Right lobe of liver (tissue), 6 donors: ENCODE measurements at regions of chr22 and their contacts with region 1.

Region 1: DNA sequence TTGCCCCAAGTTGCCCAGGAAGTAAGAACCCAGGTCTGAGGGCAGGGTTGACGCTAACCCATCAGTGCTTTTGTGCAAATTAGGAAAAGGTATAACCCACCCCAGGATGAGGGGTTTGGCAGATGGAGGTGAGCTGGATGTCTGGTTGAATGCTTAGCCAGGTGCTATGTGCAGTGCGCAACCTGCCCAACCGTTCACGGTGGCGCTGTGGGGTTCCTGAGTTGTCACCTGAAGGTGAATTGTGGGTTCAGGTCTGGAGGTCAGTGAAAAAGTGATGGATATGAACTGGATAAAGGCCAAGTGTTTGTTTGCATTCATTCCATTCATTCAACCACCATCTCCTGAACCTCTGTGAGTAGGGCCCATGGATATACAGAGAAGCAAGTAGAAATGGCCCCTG is 14.3 kb upstream of the LGALS2 start:
- DNase-seq: no peak
- ATAC-seq: no peak
- H3K4me3 ChIP-seq: no peak overlapping the region
- H3K27ac ChIP-seq: no peak overlapping the region
- H3K4me1 ChIP-seq: peaks cover 0 to 4% (median 0%) of the 10 kb centered on the region in 4 donors
- H3K27me3 ChIP-seq: no peaks in the 10 kb centered on the region
- CTCF ChIP-seq: no peak
- POLR2A ChIP-seq: no peak

Region 2: DNA sequence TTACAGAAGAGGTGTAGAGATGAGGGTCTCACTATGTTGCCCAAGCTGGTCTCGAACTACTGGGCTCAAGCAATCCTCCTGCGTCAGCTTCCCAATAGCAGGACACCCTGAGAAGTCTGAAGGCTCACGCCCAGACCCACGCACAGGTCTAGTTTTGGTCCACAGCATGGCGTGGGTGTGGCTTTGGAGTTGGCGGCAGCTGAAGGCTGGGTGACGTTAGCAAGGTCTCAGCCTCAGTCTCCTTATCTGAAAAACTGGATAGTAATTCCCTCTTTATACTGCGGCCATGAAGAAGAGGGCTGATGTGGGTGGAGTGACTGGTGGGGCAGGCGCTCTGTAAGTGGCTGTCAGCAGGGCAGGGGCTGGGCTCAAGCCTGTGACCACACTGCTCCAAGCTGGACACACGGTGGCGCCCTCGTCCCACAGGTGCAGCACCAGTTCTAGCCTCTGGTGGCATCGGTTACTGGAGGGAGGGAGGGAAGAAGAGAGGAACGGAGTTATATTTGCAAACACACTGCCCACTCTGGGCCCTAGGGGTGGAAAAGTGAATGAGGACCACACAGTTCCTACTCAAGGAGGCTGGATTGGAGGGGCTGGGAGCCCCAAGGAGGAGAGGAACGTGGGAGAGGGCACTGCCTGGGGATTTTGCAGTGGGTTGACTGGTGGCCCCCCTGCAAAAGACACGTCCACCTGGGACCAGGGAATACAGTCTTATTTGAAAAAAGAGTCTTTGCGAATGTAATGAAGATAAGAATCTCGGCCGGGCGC is 55.5 kb before region 1 on chr22:
- intact Hi-C with region 1: loop called (anchors 5 kb)
- DNase-seq: peak; percentile 94 to 96 (median 96)
- ATAC-seq: peak; percentile 98 to 100 (median 100)
- H3K4me3 ChIP-seq: peak overlapping the region in 2 of 3 donors; percentile 11 to 22
- H3K27ac ChIP-seq: peak overlapping the region in 1 of 3 donors; percentile 30
- H3K4me1 ChIP-seq: peaks cover 0 to 4% (median 2%) of the 10 kb centered on the region in 4 donors
- H3K27me3 ChIP-seq: no peaks in the 10 kb centered on the region
- CTCF ChIP-seq: peak; percentile 94 to 99 (median 98)
- POLR2A ChIP-seq: no peak